Astrocyte of the cerebellum (primary cell): ENCODE measurements at regions of chr15 and their contacts with region 1.

Region 1: GRCh38 chr15:81723701-81724100 is 322.1 kb downstream of the MEX3B start:
- DNase-seq: no peak
- H3K4me3 ChIP-seq: no peak overlapping the region
- CTCF ChIP-seq: no peak

Region 2: GRCh38 chr15:81795899-81796298 is 72.2 kb after region 1 on chr15:
- in situ Hi-C with region 1: loop called (anchors 5 kb)
- DNase-seq: no peak
- H3K4me3 ChIP-seq: no peak overlapping the region
- CTCF ChIP-seq: no peak